ENCODE measurements at regions of chr6 and their contacts with region 1.

Region 1: GRCh38 chr6:100001915-100002388 is 7.9 kb upstream of the MCHR2 start:
- DNase-seq: peak; percentile 44
- H3K4me3 Mint-ChIP-seq: no peak overlapping the region
- H3K27ac Mint-ChIP-seq: no peak overlapping the region
- H3K4me1 Mint-ChIP-seq: peaks cover 22% of the 10 kb centered on the region
- H3K27me3 Mint-ChIP-seq: no peaks in the 10 kb centered on the region
- CTCF ChIP-seq: peak; percentile 80

Region 2: DNA sequence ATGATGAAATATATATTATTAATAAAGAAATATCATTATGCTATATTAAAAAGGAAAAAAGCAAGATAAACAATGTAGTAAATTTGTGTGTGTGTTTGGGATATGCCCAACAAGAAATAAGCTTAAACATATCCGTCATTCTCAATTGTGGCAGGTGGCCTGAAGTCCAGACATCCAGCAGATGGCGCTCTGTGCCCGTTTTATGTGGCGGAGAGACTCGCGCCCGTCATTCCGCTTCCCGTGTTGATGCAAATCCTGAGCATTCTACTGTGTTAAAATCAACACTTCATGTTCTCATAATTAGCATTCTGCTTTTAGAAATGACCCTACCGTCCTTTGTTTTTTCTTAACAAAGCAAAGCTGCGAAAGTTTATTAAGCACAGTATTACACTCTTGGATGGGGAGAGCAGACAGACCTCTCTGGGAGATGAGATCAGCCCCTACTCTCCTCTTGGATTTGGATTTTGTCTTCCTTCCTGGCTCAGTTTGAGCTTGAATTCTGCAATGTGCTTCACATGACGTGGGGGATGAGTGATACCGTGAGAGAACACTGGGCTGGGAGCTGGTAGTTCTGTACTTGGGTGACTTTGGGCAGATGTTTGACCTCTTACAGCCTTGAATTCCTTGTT is 133.8 kb before region 1 on chr6:
- CTCF ChIA-PET with region 1: interaction called, 12 read pairs
- intact Hi-C with region 1: loop called (anchors 1 kb)
- DNase-seq: peak; percentile 83
- H3K4me3 Mint-ChIP-seq: no peak overlapping the region
- H3K27ac Mint-ChIP-seq: no peak overlapping the region
- H3K4me1 Mint-ChIP-seq: no peaks in the 10 kb centered on the region
- H3K27me3 Mint-ChIP-seq: peaks cover 25% of the 10 kb centered on the region
- CTCF ChIP-seq: peak; percentile 75

Region 3: GRCh38 chr6:100050550-100050949 is 48.6 kb after region 1 on chr6:
- CTCF ChIA-PET with region 1: no interaction called
- intact Hi-C with region 1: loop called (anchors 1 kb)
- DNase-seq: no peak
- H3K4me3 Mint-ChIP-seq: no peak overlapping the region
- H3K27ac Mint-ChIP-seq: no peak overlapping the region
- H3K4me1 Mint-ChIP-seq: no peaks in the 10 kb centered on the region
- H3K27me3 Mint-ChIP-seq: no peaks in the 10 kb centered on the region
- CTCF ChIP-seq: no peak

Region 4: DNA sequence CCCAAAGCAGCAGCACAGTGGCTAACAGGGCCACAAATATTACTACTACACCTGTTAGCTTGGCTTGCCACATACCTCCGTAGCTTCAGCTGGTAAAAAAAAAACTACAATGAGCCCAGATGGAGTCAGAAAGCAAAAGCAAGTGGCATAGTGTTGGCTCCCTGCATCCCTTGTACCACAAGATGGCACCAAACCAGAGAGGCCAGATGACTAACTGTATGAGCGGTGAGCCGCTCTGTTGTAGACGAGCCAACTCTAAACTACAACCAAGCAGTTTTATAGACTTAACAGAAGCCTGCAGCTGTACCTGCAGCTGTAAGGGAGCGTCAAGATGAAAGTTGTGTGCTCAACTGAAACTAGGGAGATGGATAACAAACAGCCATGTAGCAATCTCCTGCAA is 76.6 kb after region 1 on chr6:
- CTCF ChIA-PET with region 1: interaction called, 4 read pairs
- intact Hi-C with region 1: loop called (anchors 1 kb)
- DNase-seq: peak; percentile 55
- H3K4me3 Mint-ChIP-seq: no peak overlapping the region
- H3K27ac Mint-ChIP-seq: no peak overlapping the region
- H3K4me1 Mint-ChIP-seq: peaks cover 9% of the 10 kb centered on the region
- H3K27me3 Mint-ChIP-seq: no peaks in the 10 kb centered on the region
- CTCF ChIP-seq: peak; percentile 38

Region 5: GRCh38 chr6:100099189-100100074 is 97.5 kb after region 1 on chr6:
- CTCF ChIA-PET with region 1: interaction called, 28 read pairs
- intact Hi-C with region 1: loop called (anchors 1 kb)
- DNase-seq: no peak
- H3K4me3 Mint-ChIP-seq: no peak overlapping the region
- H3K27ac Mint-ChIP-seq: no peak overlapping the region
- H3K4me1 Mint-ChIP-seq: no peaks in the 10 kb centered on the region
- H3K27me3 Mint-ChIP-seq: no peaks in the 10 kb centered on the region
- CTCF ChIP-seq: peak; percentile 49

Region 6: GRCh38 chr6:100479179-100480035 is 477.5 kb after region 1 on chr6:
- CTCF ChIA-PET with region 1: interaction called, 4 read pairs
- intact Hi-C with region 1: loop called (anchors 10 kb)
- DNase-seq: peak; percentile 30
- H3K4me3 Mint-ChIP-seq: no peak overlapping the region
- H3K27ac Mint-ChIP-seq: no peak overlapping the region
- H3K4me1 Mint-ChIP-seq: peaks cover 40% of the 10 kb centered on the region
- H3K27me3 Mint-ChIP-seq: no peaks in the 10 kb centered on the region
- CTCF ChIP-seq: peak; percentile 42

Region 7: GRCh38 chr6:100664274-100665040 is 662.5 kb after region 1 on chr6:
- CTCF ChIA-PET with region 1: interaction called, 5 read pairs
- intact Hi-C with region 1: loop called (anchors 5 kb)
- DNase-seq: peak; percentile 11
- H3K4me3 Mint-ChIP-seq: no peak overlapping the region
- H3K27ac Mint-ChIP-seq: peak overlapping the region; percentile 94
- H3K4me1 Mint-ChIP-seq: peaks cover 34% of the 10 kb centered on the region
- H3K27me3 Mint-ChIP-seq: no peaks in the 10 kb centered on the region
- CTCF ChIP-seq: no peak